HCT116 (cell line): ENCODE measurements at regions of chr6 and their contacts with region 1.

Region 1: GRCh38 chr6:141403795-141404194 is 728.9 kb upstream of the GJE1 start:
- DNase-seq: no peak
- ATAC-seq: no peak
- H3K4me3 ChIP-seq: no peak overlapping the region
- H3K27ac ChIP-seq: no peak overlapping the region
- H3K4me1 ChIP-seq: no peaks in the 10 kb centered on the region
- H3K27me3 ChIP-seq: no peaks in the 10 kb centered on the region
- CTCF ChIP-seq: no peak
- POLR2A ChIP-seq: no peak
- RAD21 ChIP-seq: no peak

Region 2: DNA sequence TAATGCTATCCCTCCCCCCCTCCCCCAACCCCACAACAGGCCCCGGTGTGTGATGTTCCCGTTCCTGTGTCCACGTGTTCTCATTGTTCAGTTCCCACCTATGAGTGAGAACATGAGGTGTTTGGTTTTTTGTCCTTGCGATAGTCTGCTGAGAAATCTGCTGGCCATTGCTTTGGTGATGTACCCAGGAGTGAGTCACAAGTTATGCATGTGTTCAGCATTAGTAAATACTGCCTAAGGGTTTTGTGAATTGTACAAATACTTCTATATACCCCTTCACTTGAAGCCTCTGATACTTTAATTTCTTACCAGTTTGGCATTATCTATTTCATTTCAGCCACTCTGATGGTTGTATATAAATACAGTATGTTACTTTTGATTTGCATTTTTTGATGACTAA is 17.6 kb after region 1 on chr6:
- CTCF ChIA-PET with region 1: no interaction called
- POLR2A ChIA-PET with region 1: no interaction called
- RAD21 ChIA-PET with region 1: no interaction called
- intact Hi-C with region 1: no loop called
- DNase-seq: peak; percentile 8
- ATAC-seq: peak; percentile 36
- H3K4me3 ChIP-seq: no peak overlapping the region
- H3K27ac ChIP-seq: no peak overlapping the region
- H3K4me1 ChIP-seq: peaks cover 0 to 8% of the 10 kb centered on the region in 2 experiments; a peak in 2 of 4 replicates
- H3K27me3 ChIP-seq: no peaks in the 10 kb centered on the region
- CTCF ChIP-seq: no peak
- POLR2A ChIP-seq: no peak
- RAD21 ChIP-seq: no peak

Region 3: DNA sequence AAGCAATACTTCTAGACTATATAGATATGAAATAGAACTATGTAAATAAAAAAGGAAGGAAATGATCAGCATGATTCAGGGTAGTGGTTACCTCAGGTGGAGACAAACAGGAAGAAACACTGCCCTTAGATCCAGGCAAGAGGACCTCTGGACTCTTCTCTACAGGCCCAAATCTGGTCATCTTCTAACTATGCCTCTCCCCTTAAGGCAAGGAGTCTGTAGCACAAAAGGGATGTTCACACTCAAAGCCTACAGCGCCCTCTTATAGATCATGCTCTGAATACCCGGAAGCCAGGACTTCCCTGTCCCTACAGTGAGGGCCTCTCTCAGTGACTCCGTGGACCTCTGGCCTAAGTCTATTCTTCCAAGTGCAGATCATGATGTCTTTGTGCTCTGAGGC is 1571.6 kb after region 1 on chr6:
- CTCF ChIA-PET with region 1: no interaction called
- POLR2A ChIA-PET with region 1: no interaction called
- RAD21 ChIA-PET with region 1: no interaction called
- intact Hi-C with region 1: loop called (anchors 5 kb)
- DNase-seq: no peak
- ATAC-seq: peak; percentile 32; the same call in 1 of the 2 replicates
- H3K4me3 ChIP-seq: no peak overlapping the region
- H3K27ac ChIP-seq: no peak overlapping the region
- H3K4me1 ChIP-seq: no peaks in the 10 kb centered on the region
- H3K27me3 ChIP-seq: no peaks in the 10 kb centered on the region
- CTCF ChIP-seq: no peak
- POLR2A ChIP-seq: no peak
- RAD21 ChIP-seq: peak; percentile 43